Transverse colon (tissue), 4 donors: ENCODE measurements at regions of chr3 and their contacts with region 1.

Region 1: GRCh38 chr3:137013955-137014688 is 56.3 kb downstream of the IL20RB start:
- DNase-seq: peak; percentile 94
- H3K4me3 ChIP-seq: peak overlapping the region in 3 of 4 donors; percentile 39 to 68 (median 44)
- H3K27ac ChIP-seq: peak overlapping the region; percentile 61 to 81 (median 70)
- H3K4me1 ChIP-seq: peaks cover 4 to 13% (median 8%) of the 10 kb centered on the region in 4 donors
- H3K27me3 ChIP-seq: no peaks in the 10 kb centered on the region
- CTCF ChIP-seq: peak; percentile 86 to 98 (median 88)
- EP300 ChIP-seq: no peak
- POLR2A ChIP-seq: no peak

Region 2: DNA sequence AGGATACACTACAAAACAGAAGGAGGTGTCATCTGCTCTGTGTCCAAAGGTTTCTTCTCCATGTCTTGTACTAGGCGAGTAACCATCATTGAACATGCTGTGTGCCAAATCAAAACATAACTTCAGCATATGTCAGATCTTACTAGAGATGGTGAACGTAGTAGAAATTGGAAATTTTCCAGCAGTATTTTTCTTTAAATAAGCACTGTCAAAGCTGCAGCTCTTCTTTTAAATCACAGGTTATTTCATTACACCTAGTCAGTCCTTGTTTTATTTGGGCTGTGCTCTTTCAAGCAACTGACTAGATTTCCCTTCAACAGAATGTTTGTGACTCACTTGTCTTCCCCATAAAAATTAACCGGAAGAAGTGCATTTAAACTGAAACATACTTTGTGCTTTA is 864.5 kb before region 1 on chr3:
- in situ Hi-C with region 1: no loop called
- intact Hi-C with region 1: no loop called
- DNase-seq: no peak
- H3K4me3 ChIP-seq: no peak overlapping the region
- H3K27ac ChIP-seq: no peak overlapping the region
- H3K4me1 ChIP-seq: peaks cover 0 to 27% (median 14%) of the 10 kb centered on the region in 4 donors
- H3K27me3 ChIP-seq: no peaks in the 10 kb centered on the region
- CTCF ChIP-seq: no peak
- EP300 ChIP-seq: no peak
- POLR2A ChIP-seq: no peak

Region 3: GRCh38 chr3:136385457-136385856 is 628.7 kb before region 1 on chr3:
- in situ Hi-C with region 1: loop called (anchors 10 to 25 kb)
- intact Hi-C with region 1: loop called (anchors 5 kb)
- DNase-seq: no peak
- H3K4me3 ChIP-seq: no peak overlapping the region
- H3K27ac ChIP-seq: no peak overlapping the region
- H3K4me1 ChIP-seq: no peaks in the 10 kb centered on the region
- H3K27me3 ChIP-seq: no peaks in the 10 kb centered on the region
- CTCF ChIP-seq: no peak
- EP300 ChIP-seq: no peak
- POLR2A ChIP-seq: no peak

Region 4: DNA sequence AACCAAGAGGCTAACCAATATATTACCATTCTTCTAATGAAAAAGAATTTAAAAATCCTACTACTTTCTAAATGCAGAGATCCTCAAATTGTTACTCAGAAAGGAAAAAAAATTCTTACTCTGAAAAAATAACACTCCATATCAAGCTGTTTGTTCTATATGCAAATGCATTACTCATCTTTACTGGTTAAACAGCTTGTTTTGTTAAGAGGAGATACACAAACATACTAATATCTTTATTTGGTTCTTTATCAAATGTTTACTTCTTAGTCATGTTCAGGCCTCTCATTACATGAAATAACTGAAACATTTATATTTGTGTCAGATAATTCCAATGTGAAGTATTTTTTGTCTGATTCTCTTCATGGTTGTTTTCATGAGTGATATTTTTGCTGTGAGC is 617.2 kb before region 1 on chr3:
- in situ Hi-C with region 1: loop called (anchors 10 to 25 kb)
- intact Hi-C with region 1: loop called (anchors 5 kb)
- DNase-seq: no peak
- H3K4me3 ChIP-seq: no peak overlapping the region
- H3K27ac ChIP-seq: no peak overlapping the region
- H3K4me1 ChIP-seq: peaks cover 0 to 3% (median under 1%) of the 10 kb centered on the region in 4 donors
- H3K27me3 ChIP-seq: no peaks in the 10 kb centered on the region
- CTCF ChIP-seq: no peak
- EP300 ChIP-seq: no peak
- POLR2A ChIP-seq: no peak

Region 5: DNA sequence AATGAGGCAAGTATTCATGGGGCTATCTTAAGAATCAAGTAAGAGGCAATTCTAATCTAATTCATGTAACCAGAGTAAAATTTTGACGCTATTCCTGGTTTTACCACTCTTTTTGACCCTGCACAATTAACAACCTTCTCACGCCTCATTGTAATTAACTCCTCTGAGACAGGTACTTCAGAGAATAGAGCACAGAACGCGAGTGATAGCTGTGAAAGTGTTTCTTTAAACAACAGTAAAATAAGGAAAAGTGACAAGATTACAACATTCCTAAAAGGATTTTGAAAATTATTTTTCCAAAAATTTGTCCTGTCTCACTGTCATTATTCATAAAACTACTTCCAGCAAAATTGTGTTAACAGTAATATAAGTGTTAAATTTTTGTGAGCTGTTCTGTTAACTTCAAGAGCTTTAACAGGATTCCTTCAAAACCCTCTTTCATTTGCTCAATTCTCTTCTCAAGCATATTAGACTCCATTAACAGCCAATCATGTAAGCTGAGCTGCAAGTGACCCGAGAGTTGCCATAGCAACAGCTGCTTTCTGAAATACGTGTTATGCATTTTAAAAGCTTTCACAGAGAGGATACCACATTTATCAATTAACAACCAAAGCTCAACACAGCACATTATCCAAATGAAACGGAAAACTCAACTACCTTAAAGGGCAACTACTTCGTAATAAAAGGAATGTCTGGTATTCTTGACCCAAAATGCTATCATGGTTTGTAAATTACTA is 355.0 kb before region 1 on chr3:
- in situ Hi-C with region 1: no loop called
- intact Hi-C with region 1: no loop called
- DNase-seq: no peak
- H3K4me3 ChIP-seq: no peak overlapping the region
- H3K27ac ChIP-seq: no peak overlapping the region
- H3K4me1 ChIP-seq: peaks cover 0 to 1% (median 0%) of the 10 kb centered on the region in 4 donors
- H3K27me3 ChIP-seq: no peaks in the 10 kb centered on the region
- CTCF ChIP-seq: no peak
- EP300 ChIP-seq: no peak
- POLR2A ChIP-seq: no peak

Region 6: DNA sequence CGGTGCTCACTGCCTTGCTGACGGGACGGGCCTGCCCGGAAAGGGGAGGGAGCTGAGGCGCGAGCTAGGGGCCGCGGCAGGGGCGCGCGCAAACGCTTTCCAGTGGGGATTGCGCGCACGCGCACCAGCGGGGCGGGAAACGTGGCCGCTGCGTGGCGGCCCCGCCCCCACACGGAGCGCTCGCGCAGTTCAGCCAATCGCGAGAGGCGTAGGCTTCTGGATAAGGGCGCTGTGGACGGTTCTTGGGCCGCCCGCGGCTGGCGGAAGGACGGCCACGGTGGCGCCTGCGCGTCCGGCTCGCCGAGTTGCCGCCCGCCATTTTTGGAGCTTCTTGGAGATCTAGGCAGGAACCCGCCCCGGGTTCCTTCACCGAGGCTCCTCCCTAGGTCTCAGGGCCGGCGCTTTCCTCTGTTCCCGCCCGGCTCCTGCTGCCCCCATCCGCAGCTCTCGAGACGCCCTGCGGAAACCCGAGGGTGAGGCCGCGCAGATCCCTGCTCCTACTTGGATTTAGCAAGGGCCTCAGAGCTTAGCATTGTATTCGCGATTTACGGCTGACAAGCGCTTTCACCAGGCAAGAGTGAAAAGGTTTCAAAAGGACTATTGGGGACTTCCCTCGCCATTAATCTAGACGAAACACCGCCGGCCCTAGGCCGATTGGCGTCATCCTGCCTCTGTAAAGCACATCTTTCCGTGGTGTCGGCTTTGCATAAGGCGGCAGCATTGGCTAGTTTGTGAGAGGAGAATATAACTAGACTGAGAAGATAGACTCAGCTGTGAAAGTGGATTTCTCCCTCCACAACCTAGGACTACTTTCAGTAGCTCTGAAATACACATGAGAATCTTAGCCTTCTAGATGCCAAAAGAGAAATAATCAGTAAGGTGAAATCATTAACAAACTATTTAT is 261.4 kb before region 1 on chr3:
- in situ Hi-C with region 1: loop called in 2 of 4 experiments (anchors 10 kb)
- intact Hi-C with region 1: loop called (anchors 5 kb)
- DNase-seq: peak; percentile 99
- H3K4me3 ChIP-seq: peak overlapping the region; percentile 1 to 93 (median 90)
- H3K27ac ChIP-seq: peak overlapping the region; percentile 88 to 99 (median 96)
- H3K4me1 ChIP-seq: peaks cover 8 to 33% (median 28%) of the 10 kb centered on the region in 4 donors
- H3K27me3 ChIP-seq: no peaks in the 10 kb centered on the region
- CTCF ChIP-seq: peak in 1 of 5 experiments; percentile 21
- EP300 ChIP-seq: no peak
- POLR2A ChIP-seq: peak; percentile 90